CD8-positive, alpha-beta T cell (primary cell): ENCODE measurements at regions of chr9 and their contacts with region 1.

Region 1: DNA sequence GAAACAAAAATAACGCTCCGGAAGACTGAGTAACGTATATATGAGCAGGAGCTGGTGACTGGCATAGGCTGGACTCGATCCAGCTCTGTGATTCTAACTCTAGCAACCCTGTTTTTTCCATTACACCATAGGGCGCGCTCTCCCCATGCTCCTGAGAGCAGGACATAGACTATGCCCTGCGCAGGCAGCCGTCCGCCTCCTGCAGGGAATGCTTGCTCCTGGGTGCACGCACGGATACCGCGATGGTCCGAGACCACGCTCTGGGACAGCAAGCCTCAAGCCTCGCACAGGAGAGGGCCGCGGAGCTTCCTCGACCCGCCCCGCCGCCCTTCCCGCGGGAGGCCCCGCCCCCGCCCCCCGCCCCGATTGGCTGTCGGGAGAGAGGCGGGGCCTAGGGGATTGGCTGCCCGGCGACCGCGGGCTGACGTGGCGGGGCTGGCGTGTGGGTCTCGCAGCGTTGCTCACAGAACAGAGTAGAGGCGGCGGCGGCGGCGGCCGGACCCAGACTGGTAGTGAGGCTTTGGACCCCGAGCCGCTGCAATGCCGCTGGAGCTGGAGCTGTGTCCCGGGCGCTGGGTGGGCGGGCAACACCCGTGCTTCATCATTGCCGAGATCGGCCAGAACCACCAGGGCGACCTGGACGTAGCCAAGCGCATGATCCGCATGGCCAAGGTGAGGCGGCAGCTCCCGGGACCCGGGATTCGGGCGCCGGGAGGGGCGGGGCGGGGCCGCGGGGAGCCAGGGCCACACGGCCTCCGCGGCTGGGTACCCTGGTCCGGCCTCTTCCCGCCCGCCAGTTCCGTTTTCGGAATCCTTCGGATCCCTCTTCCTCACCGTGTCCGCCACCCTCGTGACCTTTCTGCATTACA is at the start of gene NANS:
- DNase-seq: peak; percentile 78 to 93 (median 93)
- ATAC-seq: peak; percentile 94
- H3K4me3 ChIP-seq: peak within 1 kb of the TSS; percentile 58 to 83
- H3K4me3 Mint-ChIP-seq: peak within 1 kb of the TSS; percentile 96
- H3K27ac ChIP-seq: peak within 1 kb of the TSS; percentile 81 to 83
- H3K27ac Mint-ChIP-seq: peak within 1 kb of the TSS; percentile 97
- H3K4me1 ChIP-seq: peaks cover 21% of the 10 kb centered on the region
- H3K4me1 Mint-ChIP-seq: peaks cover 24% of the 10 kb centered on the region
- H3K27me3 ChIP-seq: no peaks in the 10 kb centered on the region
- H3K27me3 Mint-ChIP-seq: no peaks in the 10 kb centered on the region
- CTCF ChIP-seq: no peak
- total RNA-seq, gene NANS: 84.6 to 92.5 TPM

Region 2: GRCh38 chr9:97803167-97804058 is 253.1 kb before region 1 on chr9:
- CTCF ChIA-PET with region 1: no interaction called
- POLR2A ChIA-PET with region 1: no interaction called
- intact Hi-C with region 1: loop called in 1 of 2 experiments (anchors 5 kb)
- DNase-seq: peak; percentile 47 to 86 (median 77)
- ATAC-seq: peak; percentile 97
- H3K4me3 ChIP-seq: peak overlapping the region; percentile 43 to 56
- H3K4me3 Mint-ChIP-seq: peak overlapping the region; percentile 81
- H3K27ac ChIP-seq: no peak overlapping the region
- H3K27ac Mint-ChIP-seq: peak overlapping the region; percentile 42
- H3K4me1 ChIP-seq: peaks cover 7% of the 10 kb centered on the region
- H3K4me1 Mint-ChIP-seq: peaks cover 5% of the 10 kb centered on the region
- H3K27me3 ChIP-seq: peaks cover 3 to 5% of the 10 kb centered on the region in 2 experiments
- H3K27me3 Mint-ChIP-seq: peaks cover 13% of the 10 kb centered on the region
- CTCF ChIP-seq: no peak

Region 3: GRCh38 chr9:97906236-97906831 is 150.2 kb before region 1 on chr9:
- CTCF ChIA-PET with region 1: no interaction called
- POLR2A ChIA-PET with region 1: no interaction called
- intact Hi-C with region 1: no loop called
- DNase-seq: peak in 4 of 9 experiments; percentile 56 to 78 (median 68)
- ATAC-seq: peak; percentile 26
- H3K4me3 ChIP-seq: peak overlapping the region; percentile 4 to 34
- H3K4me3 Mint-ChIP-seq: peak overlapping the region; percentile 80
- H3K27ac ChIP-seq: peak overlapping the region; percentile 54 to 79
- H3K27ac Mint-ChIP-seq: peak overlapping the region; percentile 97
- H3K4me1 ChIP-seq: peaks cover 92% of the 10 kb centered on the region
- H3K4me1 Mint-ChIP-seq: peaks cover 88% of the 10 kb centered on the region
- H3K27me3 ChIP-seq: no peaks in the 10 kb centered on the region
- H3K27me3 Mint-ChIP-seq: no peaks in the 10 kb centered on the region
- CTCF ChIP-seq: no peak

Region 4: GRCh38 chr9:97954550-97954989 is 101.9 kb before region 1 on chr9:
- CTCF ChIA-PET with region 1: no interaction called
- POLR2A ChIA-PET with region 1: no interaction called
- intact Hi-C with region 1: no loop called
- DNase-seq: peak; percentile 14 to 82 (median 59)
- ATAC-seq: peak; percentile 96
- H3K4me3 ChIP-seq: no peak overlapping the region
- H3K4me3 Mint-ChIP-seq: no peak overlapping the region
- H3K27ac ChIP-seq: no peak overlapping the region
- H3K27ac Mint-ChIP-seq: no peak overlapping the region
- H3K4me1 ChIP-seq: no peaks in the 10 kb centered on the region
- H3K4me1 Mint-ChIP-seq: peaks cover 6% of the 10 kb centered on the region
- H3K27me3 ChIP-seq: no peaks in the 10 kb centered on the region
- H3K27me3 Mint-ChIP-seq: no peaks in the 10 kb centered on the region
- CTCF ChIP-seq: peak; percentile 73

Region 5: GRCh38 chr9:97990266-97990665 is 66.2 kb before region 1 on chr9:
- CTCF ChIA-PET with region 1: no interaction called
- POLR2A ChIA-PET with region 1: interaction called, 4 read pairs
- intact Hi-C with region 1: loop called in 1 of 2 experiments (anchors 2 kb)
- DNase-seq: peak in 1 of 9 experiments; percentile 27
- ATAC-seq: no peak
- H3K4me3 ChIP-seq: no peak overlapping the region
- H3K4me3 Mint-ChIP-seq: no peak overlapping the region
- H3K27ac ChIP-seq: peak overlapping the region in 1 of 2 experiments; percentile 32
- H3K27ac Mint-ChIP-seq: peak overlapping the region; percentile 45
- H3K4me1 ChIP-seq: peaks cover 79% of the 10 kb centered on the region
- H3K4me1 Mint-ChIP-seq: peaks cover 87% of the 10 kb centered on the region
- H3K27me3 ChIP-seq: no peaks in the 10 kb centered on the region
- H3K27me3 Mint-ChIP-seq: no peaks in the 10 kb centered on the region
- CTCF ChIP-seq: no peak

Region 6: GRCh38 chr9:98045234-98046179 is 11.0 kb before region 1 on chr9:
- CTCF ChIA-PET with region 1: interaction called, 3 read pairs
- POLR2A ChIA-PET with region 1: interaction called, 9 read pairs
- intact Hi-C with region 1: loop called (anchors 1 kb)
- DNase-seq: peak in 6 of 9 experiments; percentile 14 to 88 (median 32)
- ATAC-seq: peak; percentile 97
- H3K4me3 ChIP-seq: peak overlapping the region; percentile 46 to 55
- H3K4me3 Mint-ChIP-seq: peak overlapping the region; percentile 78
- H3K27ac ChIP-seq: peak overlapping the region; percentile 47 to 77
- H3K27ac Mint-ChIP-seq: peak overlapping the region; percentile 93
- H3K4me1 ChIP-seq: peaks cover 21% of the 10 kb centered on the region
- H3K4me1 Mint-ChIP-seq: peaks cover 31% of the 10 kb centered on the region
- H3K27me3 ChIP-seq: no peaks in the 10 kb centered on the region
- H3K27me3 Mint-ChIP-seq: no peaks in the 10 kb centered on the region
- CTCF ChIP-seq: no peak

Region 7: GRCh38 chr9:98101868-98102273 is 45.4 kb after region 1 on chr9:
- CTCF ChIA-PET with region 1: no interaction called
- POLR2A ChIA-PET with region 1: interaction called, 11 read pairs
- intact Hi-C with region 1: loop called in 1 of 2 experiments (anchors 5 kb)
- DNase-seq: peak; percentile 64 to 97 (median 82)
- ATAC-seq: peak; percentile 95
- H3K4me3 ChIP-seq: peak overlapping the region; percentile 3 to 8
- H3K4me3 Mint-ChIP-seq: peak overlapping the region; percentile 68
- H3K27ac ChIP-seq: peak overlapping the region; percentile 33 to 76
- H3K27ac Mint-ChIP-seq: peak overlapping the region; percentile 97
- H3K4me1 ChIP-seq: peaks cover 87% of the 10 kb centered on the region
- H3K4me1 Mint-ChIP-seq: peaks cover 82% of the 10 kb centered on the region
- H3K27me3 ChIP-seq: no peaks in the 10 kb centered on the region
- H3K27me3 Mint-ChIP-seq: no peaks in the 10 kb centered on the region
- CTCF ChIP-seq: no peak

Region 8: DNA sequence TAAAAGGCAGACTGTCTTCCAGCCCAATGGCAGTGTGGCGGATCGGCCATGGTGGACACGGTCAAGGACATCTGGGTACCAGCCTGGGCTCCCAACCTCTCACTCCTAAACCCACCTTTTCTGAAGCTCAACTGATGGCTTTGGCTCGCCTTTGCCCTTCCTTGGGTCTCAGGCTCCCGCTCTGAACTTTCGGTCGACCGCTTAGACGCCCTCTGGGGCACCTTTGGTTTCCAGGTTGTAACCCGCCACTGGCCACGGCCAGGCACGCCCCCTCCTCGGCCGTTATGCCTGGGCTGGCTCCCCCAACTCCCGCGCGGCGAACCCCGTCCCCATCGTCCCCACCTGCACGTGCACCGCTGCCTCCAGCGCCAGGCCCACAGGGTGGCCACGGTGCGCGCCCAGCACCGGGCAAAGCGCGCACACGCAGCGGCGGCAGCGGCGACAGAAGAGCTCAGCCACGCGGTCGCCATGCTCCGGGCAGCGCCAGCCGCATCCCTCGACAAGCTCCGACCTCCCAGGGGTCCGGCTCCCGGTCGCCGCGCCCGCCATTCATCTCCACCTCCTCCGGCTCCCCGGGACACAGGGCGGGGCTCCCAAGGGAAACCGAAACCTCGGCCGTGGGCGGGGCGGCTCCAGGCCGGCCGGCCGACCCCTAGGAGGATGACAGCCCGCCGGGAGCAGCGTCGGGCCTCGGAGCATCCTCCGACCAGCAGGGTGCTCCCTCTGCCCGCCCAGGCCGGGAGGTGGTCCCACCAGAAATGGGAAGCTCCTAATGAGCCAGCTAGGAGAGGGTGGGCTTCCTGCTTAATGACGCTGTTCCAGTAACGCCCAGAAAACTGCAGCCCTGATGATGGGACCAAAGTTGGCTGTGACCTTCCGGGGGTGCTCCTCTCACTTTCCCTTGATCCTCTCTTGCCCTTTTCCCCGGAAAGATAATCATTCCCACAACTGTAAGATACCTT is 62.4 kb after region 1 on chr9 and contains the start of gene TRIM14:
- CTCF ChIA-PET with region 1: interaction called, 3 read pairs
- POLR2A ChIA-PET with region 1: interaction called, 10 read pairs
- intact Hi-C with region 1: loop called in 1 of 2 experiments (anchors 1 kb)
- DNase-seq: peak in 8 of 9 experiments; percentile 31 to 77 (median 60)
- ATAC-seq: peak; percentile 51
- H3K4me3 ChIP-seq: peak within 1 kb of the TSS; percentile 56 to 72
- H3K4me3 Mint-ChIP-seq: peak within 1 kb of the TSS; percentile 86
- H3K27ac ChIP-seq: peak within 1 kb of the TSS; percentile 71 to 92
- H3K27ac Mint-ChIP-seq: peak within 1 kb of the TSS; percentile 97
- H3K4me1 ChIP-seq: peaks cover 48% of the 10 kb centered on the region
- H3K4me1 Mint-ChIP-seq: peaks cover 54% of the 10 kb centered on the region
- H3K27me3 ChIP-seq: no peaks in the 10 kb centered on the region
- H3K27me3 Mint-ChIP-seq: no peaks in the 10 kb centered on the region
- CTCF ChIP-seq: no peak
- total RNA-seq, gene TRIM14: 22.6 to 23.5 TPM

Region 9: GRCh38 chr9:98192503-98193335 is 136.2 kb after region 1 on chr9 and contains the start of gene CORO2A:
- CTCF ChIA-PET with region 1: no interaction called
- POLR2A ChIA-PET with region 1: no interaction called
- intact Hi-C with region 1: loop called in 1 of 2 experiments (anchors 2 kb)
- DNase-seq: peak; percentile 16 to 85 (median 69)
- ATAC-seq: peak; percentile 72
- H3K4me3 ChIP-seq: peak within 1 kb of the TSS; percentile 80 to 84
- H3K4me3 Mint-ChIP-seq: peak within 1 kb of the TSS; percentile 85
- H3K27ac ChIP-seq: peak within 1 kb of the TSS; percentile 39 to 42
- H3K27ac Mint-ChIP-seq: peak within 1 kb of the TSS; percentile 69
- H3K4me1 ChIP-seq: peaks cover 32% of the 10 kb centered on the region
- H3K4me1 Mint-ChIP-seq: peaks cover 40% of the 10 kb centered on the region
- H3K27me3 ChIP-seq: no peaks in the 10 kb centered on the region
- H3K27me3 Mint-ChIP-seq: no peaks in the 10 kb centered on the region
- CTCF ChIP-seq: no peak
- total RNA-seq, gene CORO2A: 6.4 to 6.7 TPM